ENCODE measurements at regions of chr5 and their contacts with region 1.

Region 1: GRCh38 chr5:1763548-1763911 is 36.1 kb downstream of the MRPL36 start:
- DNase-seq: peak; percentile 73
- ATAC-seq: peak; percentile 97
- H3K4me3 ChIP-seq: no peak overlapping the region
- H3K27ac ChIP-seq: no peak overlapping the region
- H3K4me1 ChIP-seq: no peaks in the 10 kb centered on the region
- H3K27me3 ChIP-seq: peaks cover 47% of the 10 kb centered on the region
- CTCF ChIP-seq: peak; percentile 88

Region 2: GRCh38 chr5:2017540-2018389 is 254.2 kb after region 1 on chr5:
- CTCF ChIA-PET with region 1: no interaction called
- POLR2A ChIA-PET with region 1: no interaction called
- intact Hi-C with region 1: loop called (anchors 2 kb)
- DNase-seq: peak; percentile 52
- ATAC-seq: no peak
- H3K4me3 ChIP-seq: no peak overlapping the region
- H3K27ac ChIP-seq: no peak overlapping the region
- H3K4me1 ChIP-seq: no peaks in the 10 kb centered on the region
- H3K27me3 ChIP-seq: peaks cover 45% of the 10 kb centered on the region
- CTCF ChIP-seq: peak; percentile 57

Region 3: GRCh38 chr5:2156358-2157059 is 393.0 kb after region 1 on chr5:
- CTCF ChIA-PET with region 1: no interaction called
- POLR2A ChIA-PET with region 1: no interaction called
- intact Hi-C with region 1: loop called (anchors 10 kb)
- DNase-seq: peak; percentile 5
- ATAC-seq: no peak
- H3K4me3 ChIP-seq: no peak overlapping the region
- H3K27ac ChIP-seq: no peak overlapping the region
- H3K4me1 ChIP-seq: no peaks in the 10 kb centered on the region
- H3K27me3 ChIP-seq: peaks cover 5% of the 10 kb centered on the region; the same call in 1 of the 2 replicates
- CTCF ChIP-seq: no peak

Region 4: GRCh38 chr5:2746561-2747032 is 983.1 kb after region 1 on chr5:
- CTCF ChIA-PET with region 1: no interaction called
- POLR2A ChIA-PET with region 1: no interaction called
- intact Hi-C with region 1: loop called (anchors 1 kb)
- DNase-seq: peak; percentile 49
- ATAC-seq: no peak
- H3K4me3 ChIP-seq: no peak overlapping the region
- H3K27ac ChIP-seq: no peak overlapping the region
- H3K4me1 ChIP-seq: peaks cover 6% of the 10 kb centered on the region; the same call in 1 of the 2 replicates
- H3K27me3 ChIP-seq: no peaks in the 10 kb centered on the region
- CTCF ChIP-seq: peak; percentile 56